Activated naive CD4-positive, alpha-beta T cell treated with anti-CD3 and anti-CD28 coated beads for 36 hours (primary cell): ENCODE measurements at regions of chr13 and their contacts with region 1.

Region 1: DNA sequence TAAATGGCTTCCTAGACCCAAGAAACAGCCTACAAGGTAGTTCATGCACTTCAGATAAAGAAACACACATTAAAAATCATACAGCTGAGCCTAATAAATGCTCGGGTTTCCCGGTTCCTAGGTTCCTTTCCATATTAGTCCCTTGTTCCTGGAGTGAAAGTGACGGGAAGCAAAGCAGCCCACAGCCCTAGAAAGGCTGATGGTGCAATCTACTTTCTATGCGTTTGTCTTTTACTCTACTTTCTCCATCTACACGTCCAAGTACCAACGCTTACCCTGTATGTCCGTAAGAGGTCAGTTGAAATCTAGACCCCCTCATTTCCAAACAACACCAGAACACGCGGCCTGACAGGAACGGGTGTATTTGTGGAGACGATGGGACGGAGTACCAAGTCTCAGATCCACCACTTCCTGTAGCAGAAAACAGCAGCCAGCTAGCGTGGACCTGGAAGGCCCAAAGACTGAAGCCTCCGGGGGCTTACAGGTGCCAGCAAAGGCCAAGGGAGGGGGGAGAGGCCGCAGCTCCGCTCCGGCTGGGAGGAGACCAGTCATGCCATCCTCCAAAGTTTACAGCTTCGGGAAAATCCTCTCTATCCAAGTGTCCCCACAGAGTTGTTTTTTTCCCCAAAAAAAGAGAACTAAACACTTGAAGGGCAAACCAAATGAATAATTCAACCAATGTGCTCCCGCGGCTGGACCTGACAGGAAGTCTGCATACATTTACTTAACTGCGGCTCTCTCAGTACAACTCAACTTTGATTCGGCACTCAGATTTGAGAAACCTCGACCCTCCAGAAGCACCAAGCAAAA is 34.1 kb downstream of the STK24 start:
- DNase-seq: peak; percentile 63
- H3K4me3 Mint-ChIP-seq: peak overlapping the region; percentile 67
- H3K27ac Mint-ChIP-seq: peak overlapping the region; percentile 82
- H3K4me1 Mint-ChIP-seq: peaks cover 94% of the 10 kb centered on the region
- H3K27me3 Mint-ChIP-seq: no peaks in the 10 kb centered on the region

Region 2: GRCh38 chr13:98517576-98518310 is 25.0 kb before region 1 on chr13:
- CTCF ChIA-PET with region 1: interaction called, 4 read pairs
- intact Hi-C with region 1: loop called (anchors 1 kb)
- DNase-seq: peak; percentile 75
- H3K4me3 Mint-ChIP-seq: no peak overlapping the region
- H3K27ac Mint-ChIP-seq: peak overlapping the region; percentile 81
- H3K4me1 Mint-ChIP-seq: peaks cover 97% of the 10 kb centered on the region
- H3K27me3 Mint-ChIP-seq: no peaks in the 10 kb centered on the region

Region 3: DNA sequence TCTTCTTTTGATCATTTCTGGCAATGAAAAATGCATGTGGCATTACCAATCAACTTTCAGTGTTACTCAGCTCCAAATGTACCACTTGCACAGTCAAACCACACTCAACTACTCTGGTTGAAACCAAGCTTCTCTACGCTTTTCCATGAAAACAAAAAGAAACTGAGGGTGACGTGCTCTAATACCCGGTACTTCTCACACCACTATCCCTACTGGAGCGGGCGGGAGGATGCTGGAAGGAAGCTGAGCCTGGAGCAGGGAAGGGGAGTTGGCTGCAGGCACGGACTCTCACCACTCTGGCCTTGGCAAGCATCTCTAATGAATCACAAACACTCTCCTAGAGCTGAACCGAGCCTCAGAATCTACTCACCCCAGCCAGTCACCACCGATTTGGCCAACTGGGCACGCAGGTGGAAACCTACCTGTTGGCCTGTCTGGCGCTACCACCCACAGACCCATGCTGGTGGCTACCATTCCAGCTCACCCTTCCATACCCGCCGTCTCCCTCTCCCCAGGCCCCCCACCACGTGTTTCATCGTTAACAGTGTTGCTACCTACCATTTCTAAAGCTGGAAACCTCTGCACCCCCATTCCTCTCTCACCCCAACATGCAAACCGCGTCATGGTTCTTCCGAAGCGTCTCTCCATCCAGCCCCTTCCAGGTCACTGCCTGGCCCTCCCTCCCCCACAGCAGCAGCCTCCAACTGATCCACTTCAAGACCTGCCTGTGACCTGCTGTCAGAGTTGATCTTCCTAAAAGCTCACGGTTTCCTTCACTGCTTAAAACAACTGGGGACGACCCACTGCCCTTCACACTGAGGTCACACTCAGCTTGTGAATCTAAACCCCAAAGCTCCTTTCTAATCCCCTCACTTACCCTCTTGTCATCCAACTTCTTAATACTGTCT is 13.9 kb before region 1 on chr13:
- CTCF ChIA-PET with region 1: interaction called, 7 read pairs
- intact Hi-C with region 1: loop called (anchors 1 kb)
- DNase-seq: peak; percentile 43
- H3K4me3 Mint-ChIP-seq: no peak overlapping the region
- H3K27ac Mint-ChIP-seq: peak overlapping the region; percentile 75
- H3K4me1 Mint-ChIP-seq: peaks cover 91% of the 10 kb centered on the region
- H3K27me3 Mint-ChIP-seq: no peaks in the 10 kb centered on the region

Region 4: DNA sequence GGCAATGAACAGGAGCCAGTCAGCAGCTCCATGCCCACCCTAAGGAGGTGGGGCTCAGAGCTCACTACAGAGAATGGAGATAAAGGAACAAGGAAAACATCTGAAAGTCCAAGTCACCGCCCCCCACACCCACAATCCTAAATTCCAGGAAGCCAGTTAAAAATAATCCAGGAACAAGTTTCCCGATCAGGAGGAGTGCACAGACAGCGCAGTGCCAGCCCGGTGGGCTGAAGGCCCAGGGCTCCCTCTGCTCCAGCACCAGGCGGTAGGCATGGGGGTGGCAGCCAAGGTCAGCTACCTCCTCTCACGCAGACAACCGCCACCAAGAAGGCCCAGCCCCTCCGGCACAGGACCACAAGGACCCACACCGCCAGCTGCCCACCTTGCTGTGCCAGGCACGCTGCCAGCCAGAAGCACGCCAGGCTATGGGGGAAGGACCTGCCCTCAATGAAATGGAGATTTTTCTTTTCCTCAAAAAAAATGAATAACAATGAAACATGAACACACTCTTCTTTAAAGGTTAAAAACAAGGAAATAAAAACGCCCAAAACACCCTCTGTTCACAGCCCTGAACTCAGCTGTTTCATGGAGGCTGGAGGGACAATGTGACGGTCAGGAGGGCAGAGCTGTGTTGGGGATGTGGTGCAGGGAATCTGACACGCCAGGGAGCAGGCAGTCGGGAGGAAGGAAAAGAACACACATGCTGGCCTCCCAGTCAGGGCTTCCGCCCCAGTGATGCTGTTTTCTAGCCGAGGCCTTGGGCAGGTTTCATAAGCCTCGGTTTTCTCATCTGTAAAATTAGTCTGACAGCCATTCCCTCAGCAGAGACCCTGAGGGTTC is 23.2 kb after region 1 on chr13:
- CTCF ChIA-PET with region 1: interaction called, 6 read pairs
- intact Hi-C with region 1: loop called (anchors 1 kb)
- DNase-seq: peak; percentile 38
- H3K4me3 Mint-ChIP-seq: peak overlapping the region; percentile 53
- H3K27ac Mint-ChIP-seq: peak overlapping the region; percentile 88
- H3K4me1 Mint-ChIP-seq: peaks cover 92% of the 10 kb centered on the region
- H3K27me3 Mint-ChIP-seq: no peaks in the 10 kb centered on the region